ENCODE measurements at regions of chr14 and their contacts with region 1.

Region 1: GRCh38 chr14:69858801-69859200 is 20.4 kb upstream of the SMOC1 start:
- DNase-seq: no peak
- H3K4me3 ChIP-seq: no peak overlapping the region
- H3K27ac ChIP-seq: no peak overlapping the region
- H3K4me1 ChIP-seq: no peaks in the 10 kb centered on the region
- H3K27me3 ChIP-seq: peaks cover 6% of the 10 kb centered on the region
- CTCF ChIP-seq: no peak

Region 2: GRCh38 chr14:69648477-69649451 is 210.0 kb before region 1 on chr14:
- CTCF ChIA-PET with region 1: no interaction called
- POLR2A ChIA-PET with region 1: no interaction called
- intact Hi-C with region 1: no loop called
- DNase-seq: no peak
- H3K4me3 ChIP-seq: no peak overlapping the region
- H3K27ac ChIP-seq: no peak overlapping the region
- H3K4me1 ChIP-seq: no peaks in the 10 kb centered on the region
- H3K27me3 ChIP-seq: no peaks in the 10 kb centered on the region
- CTCF ChIP-seq: no peak

Region 3: GRCh38 chr14:69803753-69804152 is 55.0 kb before region 1 on chr14:
- CTCF ChIA-PET with region 1: interaction called, 10 read pairs
- POLR2A ChIA-PET with region 1: no interaction called
- intact Hi-C with region 1: no loop called
- DNase-seq: no peak
- H3K4me3 ChIP-seq: no peak overlapping the region
- H3K27ac ChIP-seq: no peak overlapping the region
- H3K4me1 ChIP-seq: no peaks in the 10 kb centered on the region
- H3K27me3 ChIP-seq: peaks cover 4% of the 10 kb centered on the region
- CTCF ChIP-seq: peak; percentile 29; the same call in 1 of the 2 replicates

Region 4: GRCh38 chr14:70148911-70149595 is 290.3 kb after region 1 on chr14:
- CTCF ChIA-PET with region 1: no interaction called
- POLR2A ChIA-PET with region 1: no interaction called
- intact Hi-C with region 1: no loop called
- DNase-seq: no peak
- H3K4me3 ChIP-seq: no peak overlapping the region
- H3K27ac ChIP-seq: no peak overlapping the region
- H3K4me1 ChIP-seq: no peaks in the 10 kb centered on the region
- H3K27me3 ChIP-seq: peaks cover 48% of the 10 kb centered on the region
- CTCF ChIP-seq: no peak